Activated T-helper 2 cell treated with anti-CD3 and anti-CD28 coated beads, Interferon-gamma antibody, Interleukin-2, Interleukin-4, amounts not matched to agents 10 μg/mL and 5 μg/mL and 100 μg/mL, durations not matched to agents 14 hours and 24 hours and 36 hours (primary cell): ENCODE measurements at regions of chr16 and their contacts with region 1.

Region 1: DNA sequence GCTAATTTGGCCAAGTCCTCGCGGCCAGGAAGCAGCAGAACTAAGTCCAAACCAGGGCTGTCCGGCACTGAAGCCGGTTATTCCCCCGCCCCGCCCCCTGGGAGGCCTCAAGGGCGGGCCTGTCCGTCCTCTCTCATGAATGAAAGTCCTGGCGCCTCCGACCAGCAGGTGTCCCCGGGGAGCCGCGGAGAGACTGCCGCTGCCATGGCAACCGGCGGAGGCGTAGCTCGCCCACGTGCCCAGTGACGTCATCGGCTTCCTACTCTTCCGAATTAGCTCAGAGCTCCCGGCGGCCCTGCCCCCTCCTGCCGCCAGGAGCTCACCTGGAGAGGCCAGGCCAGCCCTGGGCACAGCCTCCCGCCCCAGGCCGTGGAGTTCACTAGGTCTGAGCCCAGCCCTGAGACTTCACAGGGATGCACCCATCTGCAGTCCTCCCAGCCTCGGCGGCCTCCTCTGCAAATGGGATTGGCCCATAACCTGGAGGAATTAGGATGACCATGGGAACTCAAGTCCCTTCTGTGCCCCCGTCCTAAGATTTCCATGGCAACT is 1.3 kb downstream of the SPATA2L start:
- DNase-seq: peak; percentile 95
- H3K4me3 Mint-ChIP-seq: peak overlapping the region; percentile 83
- H3K27ac Mint-ChIP-seq: peak overlapping the region; percentile 67
- H3K4me1 Mint-ChIP-seq: peaks cover 12% of the 10 kb centered on the region
- H3K27me3 Mint-ChIP-seq: no peaks in the 10 kb centered on the region

Region 2: DNA sequence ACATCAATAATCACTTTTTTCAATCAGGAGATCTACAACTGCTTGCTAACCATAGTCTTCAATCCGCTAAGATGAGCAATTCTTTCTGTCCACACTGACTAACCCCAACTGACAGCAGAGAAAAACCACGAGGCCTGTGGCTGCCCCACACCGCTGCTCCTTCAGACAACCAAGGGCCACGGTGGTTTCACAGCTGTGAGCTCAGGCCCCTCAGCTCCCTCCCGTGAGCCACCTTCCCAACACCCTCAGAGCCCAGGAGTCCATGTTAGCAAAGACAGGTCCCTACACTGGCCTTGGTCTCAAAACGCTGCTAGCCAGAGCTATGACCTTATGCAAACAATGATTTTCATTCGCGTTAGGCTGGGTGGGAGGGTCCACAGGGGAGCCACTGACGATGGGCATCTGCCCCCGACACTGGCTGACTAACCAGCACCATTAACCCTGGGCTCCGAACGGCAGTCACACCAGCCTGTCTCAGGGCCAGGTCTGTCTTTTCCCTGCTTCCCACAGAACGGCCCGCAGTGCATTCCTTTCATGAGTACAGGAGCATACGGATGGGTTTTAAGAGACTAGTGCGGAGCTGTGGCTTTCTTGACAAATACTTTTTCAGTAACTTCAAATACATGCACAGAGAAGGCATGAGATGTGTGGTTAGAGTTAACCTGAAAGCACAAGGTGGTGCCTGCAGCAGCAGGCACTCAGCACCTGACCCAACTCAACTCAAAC is 277.1 kb before region 1 on chr16:
- intact Hi-C with region 1: no loop called
- DNase-seq: peak; percentile 28
- H3K4me3 Mint-ChIP-seq: peak overlapping the region; percentile 10
- H3K27ac Mint-ChIP-seq: peak overlapping the region; percentile 87
- H3K4me1 Mint-ChIP-seq: peaks cover 58% of the 10 kb centered on the region
- H3K27me3 Mint-ChIP-seq: no peaks in the 10 kb centered on the region

Region 3: DNA sequence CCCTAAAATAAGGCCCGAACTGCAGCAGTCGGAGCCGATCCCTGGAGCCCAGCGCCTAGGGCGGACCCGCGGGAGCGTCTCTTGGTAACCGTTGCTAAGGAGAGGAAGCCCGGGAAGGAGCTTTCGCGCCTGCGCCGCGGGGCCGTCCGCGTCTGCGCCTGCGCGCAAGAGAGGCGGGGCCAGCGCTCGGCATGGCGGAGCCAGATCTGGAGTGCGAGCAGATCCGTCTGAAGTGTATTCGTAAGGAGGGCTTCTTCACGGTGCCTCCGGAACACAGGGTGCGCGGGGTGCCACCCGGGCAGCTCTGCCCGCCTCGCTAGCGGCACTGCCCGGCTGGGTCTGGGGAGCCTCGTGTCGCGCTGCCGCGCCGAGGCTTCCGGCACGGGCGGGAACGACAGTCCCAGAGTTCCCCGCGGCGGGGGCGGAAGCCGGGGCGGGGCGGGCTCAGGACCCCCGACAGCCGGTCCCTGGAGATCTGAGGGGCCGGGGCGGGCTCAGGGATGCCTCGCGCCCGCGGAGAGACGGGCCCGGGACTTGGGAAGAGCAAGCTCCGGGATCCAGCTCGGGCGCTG is 13.6 kb before region 1 on chr16 and contains the start of gene CDK10:
- intact Hi-C with region 1: loop called (anchors 2 kb)
- DNase-seq: peak; percentile 90
- H3K4me3 Mint-ChIP-seq: peak within 1 kb of the TSS; percentile 96
- H3K27ac Mint-ChIP-seq: peak within 1 kb of the TSS; percentile 84
- H3K4me1 Mint-ChIP-seq: peaks cover 8% of the 10 kb centered on the region
- H3K27me3 Mint-ChIP-seq: no peaks in the 10 kb centered on the region
- total RNA-seq, gene CDK10: 95.5 and 103 TPM in 2 replicates

Region 4: GRCh38 chr16:89793955-89794354 is 93.8 kb after region 1 on chr16:
- intact Hi-C with region 1: loop called (anchors 1 kb)
- DNase-seq: no peak
- H3K4me3 Mint-ChIP-seq: no peak overlapping the region
- H3K27ac Mint-ChIP-seq: no peak overlapping the region
- H3K4me1 Mint-ChIP-seq: no peaks in the 10 kb centered on the region
- H3K27me3 Mint-ChIP-seq: no peaks in the 10 kb centered on the region

Region 5: GRCh38 chr16:89815639-89816348 is 115.6 kb after region 1 on chr16:
- intact Hi-C with region 1: loop called (anchors 1 kb)
- DNase-seq: no peak
- H3K4me3 Mint-ChIP-seq: peak overlapping the region; percentile 87
- H3K27ac Mint-ChIP-seq: peak overlapping the region; percentile 72
- H3K4me1 Mint-ChIP-seq: peaks cover 33% of the 10 kb centered on the region
- H3K27me3 Mint-ChIP-seq: no peaks in the 10 kb centered on the region

Region 6: DNA sequence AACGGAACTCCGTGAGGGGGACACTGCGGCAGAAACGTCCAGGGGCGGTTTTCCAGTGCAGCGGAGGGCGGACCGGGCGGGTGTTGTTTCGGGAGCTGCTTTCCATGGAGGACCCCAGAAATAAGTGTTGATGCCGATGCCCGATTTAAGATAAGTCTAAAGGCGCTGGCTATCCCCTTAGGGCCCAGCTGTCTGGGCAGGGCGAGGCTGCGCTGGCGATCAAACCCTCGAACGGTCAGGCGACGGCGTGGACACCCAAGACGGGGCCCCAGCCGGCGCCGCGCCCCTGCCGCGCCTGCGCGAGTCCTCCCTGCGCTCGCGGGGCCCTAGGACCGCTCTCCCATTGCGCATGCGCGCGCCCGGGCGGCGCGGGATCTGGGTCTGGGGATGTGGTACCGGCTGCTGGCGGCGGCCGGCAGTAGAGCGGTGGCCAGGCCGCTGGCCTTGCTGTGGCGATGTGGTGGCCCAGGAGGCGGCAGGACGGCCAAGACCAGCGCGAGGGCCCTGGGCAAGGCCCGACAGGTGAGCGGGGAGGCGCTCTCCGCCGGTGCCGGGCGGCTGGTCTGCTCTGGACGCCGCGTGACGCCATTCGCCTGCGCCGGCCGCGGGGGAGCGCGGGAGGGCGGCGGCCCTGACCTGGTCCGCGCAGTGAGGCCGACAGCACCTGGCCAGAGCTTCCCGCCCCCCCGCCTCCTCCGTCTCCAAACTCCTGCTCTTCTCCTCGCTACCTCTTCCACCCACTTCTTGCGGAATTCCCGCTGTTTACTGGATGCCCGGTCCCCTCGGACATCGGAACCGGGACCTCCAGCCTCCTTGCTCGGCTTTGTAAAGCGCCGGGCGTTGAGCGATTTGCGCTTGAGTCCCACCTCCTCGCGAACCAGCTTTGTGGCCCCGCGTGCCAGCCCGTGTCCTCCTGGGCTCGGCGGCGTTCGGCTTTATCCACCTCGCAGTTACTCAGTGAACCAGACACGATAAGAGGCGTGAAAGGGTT is 272.4 kb after region 1 on chr16:
- intact Hi-C with region 1: loop called (anchors 5 kb)
- DNase-seq: peak; percentile 90
- H3K4me3 Mint-ChIP-seq: peak overlapping the region; percentile 95
- H3K27ac Mint-ChIP-seq: peak overlapping the region; percentile 96
- H3K4me1 Mint-ChIP-seq: peaks cover 17% of the 10 kb centered on the region
- H3K27me3 Mint-ChIP-seq: no peaks in the 10 kb centered on the region